ENCODE measurements at regions of chr1 and their contacts with region 1.

Region 1: DNA sequence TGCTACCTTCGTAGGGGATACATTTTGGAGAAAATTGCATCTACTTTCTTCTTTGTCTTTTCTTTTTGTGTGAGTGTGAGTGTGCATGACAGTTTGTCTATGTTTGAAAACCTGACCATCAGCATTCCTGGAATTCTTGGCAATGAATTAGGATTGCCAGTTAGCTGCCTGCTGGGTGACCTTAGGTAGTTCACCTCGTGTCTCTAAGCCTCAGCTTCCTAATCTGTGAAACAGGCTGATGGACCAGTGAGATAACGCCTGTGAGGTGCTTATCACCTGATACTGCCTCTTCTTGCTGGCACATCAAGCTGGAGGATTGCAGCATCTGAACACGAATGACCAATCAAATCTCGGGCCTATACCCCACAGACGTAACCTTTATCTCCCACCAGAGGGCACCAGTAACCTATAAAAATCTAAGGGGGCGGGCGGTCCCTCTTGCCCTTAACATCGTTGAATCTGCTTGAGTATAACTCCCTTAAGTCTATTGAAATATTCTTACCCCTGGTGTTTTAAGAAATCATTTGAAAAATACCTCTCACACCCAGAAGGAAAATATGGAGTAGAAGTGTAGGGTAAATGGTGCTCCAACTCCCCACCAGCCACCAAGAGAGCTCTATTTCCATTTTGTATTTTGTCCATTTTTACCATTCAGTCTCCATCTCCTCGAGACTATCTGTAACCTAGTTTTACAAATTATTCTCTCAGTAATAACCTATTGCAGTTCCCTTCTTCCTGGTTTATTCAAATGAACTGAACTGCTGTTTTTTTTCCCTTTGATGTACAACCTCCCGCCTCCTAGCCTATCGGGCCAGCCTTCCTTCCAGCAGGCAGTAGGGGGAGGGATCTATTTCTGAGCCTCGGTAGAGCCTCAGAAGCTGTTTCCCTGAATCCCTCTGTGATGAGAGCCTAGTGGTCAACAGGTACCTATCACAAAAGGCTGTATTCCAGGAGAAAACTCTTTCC is 49.7 kb downstream of the MDM4 start:
- DNase-seq: peak in 3 of 5 donors; percentile 33 to 38 (median 37)
- ATAC-seq: peak; percentile 38 to 88 (median 80)
- H3K4me3 ChIP-seq: no peak overlapping the region
- H3K27ac ChIP-seq: no peak overlapping the region
- H3K4me1 ChIP-seq: no peaks in the 10 kb centered on the region
- H3K27me3 ChIP-seq: no peaks in the 10 kb centered on the region
- CTCF ChIP-seq: peak; percentile 47 to 72 (median 63)
- POLR2A ChIP-seq: no peak

Region 2: GRCh38 chr1:204495078-204495753 is 70.7 kb before region 1 on chr1:
- intact Hi-C with region 1: no loop called
- DNase-seq: no peak
- ATAC-seq: no peak
- H3K4me3 ChIP-seq: peak overlapping the region; percentile 59 to 86 (median 75)
- H3K27ac ChIP-seq: peak overlapping the region; percentile 67 to 98 (median 90)
- H3K4me1 ChIP-seq: peaks cover 3 to 41% (median 26%) of the 10 kb centered on the region in 12 donors
- H3K27me3 ChIP-seq: no peaks in the 10 kb centered on the region
- CTCF ChIP-seq: no peak
- POLR2A ChIP-seq: no peak

Region 3: DNA sequence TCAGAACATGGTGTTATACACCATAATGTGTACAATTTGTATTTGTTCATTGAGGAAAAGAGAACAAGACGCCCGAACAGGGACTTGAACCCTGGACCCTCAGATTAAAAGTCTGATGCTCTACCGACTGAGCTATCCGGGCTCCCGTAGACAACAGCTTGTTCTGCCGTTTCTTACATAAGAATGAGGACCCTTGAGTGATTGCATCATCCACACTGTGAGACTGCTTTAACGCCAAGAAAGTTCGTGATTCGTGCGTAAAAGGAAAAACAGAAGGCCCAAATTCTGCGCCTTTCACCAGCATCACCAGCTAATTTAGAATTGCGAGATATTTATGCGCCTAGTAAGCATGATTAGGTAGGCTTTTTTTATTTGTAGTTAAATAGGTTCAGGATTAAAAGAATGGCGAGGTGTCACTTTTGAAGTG is 58.9 kb before region 1 on chr1:
- intact Hi-C with region 1: no loop called
- DNase-seq: peak in 4 of 5 donors; percentile 72 to 83 (median 78)
- ATAC-seq: peak; percentile 77 to 89 (median 82)
- H3K4me3 ChIP-seq: peak overlapping the region; percentile 5 to 76 (median 60)
- H3K27ac ChIP-seq: peak overlapping the region; percentile 70 to 89 (median 84)
- H3K4me1 ChIP-seq: peaks cover 0 to 34% (median 7%) of the 10 kb centered on the region in 12 donors
- H3K27me3 ChIP-seq: no peaks in the 10 kb centered on the region
- CTCF ChIP-seq: no peak
- POLR2A ChIP-seq: peak in 1 of 2 donors; percentile 7

Region 4: DNA sequence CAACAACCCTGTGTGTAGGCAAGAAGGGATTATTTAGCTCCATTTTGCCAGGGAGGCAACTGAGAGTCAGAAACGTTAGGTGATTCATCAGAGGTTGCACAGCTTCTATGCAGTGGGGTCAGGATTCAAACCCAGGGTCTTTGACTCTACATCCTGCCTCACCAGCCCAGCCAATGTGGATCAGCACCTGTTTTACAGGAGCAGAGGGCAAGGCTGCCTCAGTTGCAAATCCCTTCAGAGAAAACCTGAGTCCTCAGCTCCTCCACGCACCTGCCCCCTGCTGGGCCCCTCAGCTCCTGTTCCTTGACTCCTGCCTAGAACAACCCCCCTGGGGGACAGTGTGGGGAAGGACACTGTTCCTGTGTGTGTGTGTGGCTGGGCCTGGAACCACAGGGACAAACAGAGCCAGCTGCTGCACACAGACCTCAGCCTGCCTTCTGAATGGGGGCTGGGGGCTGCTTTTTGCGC is 58.0 kb after region 1 on chr1:
- intact Hi-C with region 1: loop called in 1 of 10 experiments (anchors 10 kb)
- DNase-seq: no peak
- ATAC-seq: no peak
- H3K4me3 ChIP-seq: no peak overlapping the region
- H3K27ac ChIP-seq: no peak overlapping the region
- H3K4me1 ChIP-seq: peaks cover 0 to 6% (median 0%) of the 10 kb centered on the region in 12 donors
- H3K27me3 ChIP-seq: no peaks in the 10 kb centered on the region
- CTCF ChIP-seq: no peak
- POLR2A ChIP-seq: no peak

Region 5: GRCh38 chr1:204763706-204764427 is 198.0 kb after region 1 on chr1:
- intact Hi-C with region 1: loop called in 9 of 10 experiments (anchors 1 to 5 kb)
- DNase-seq: peak; percentile 55 to 87 (median 73)
- ATAC-seq: peak; percentile 86 to 97 (median 93)
- H3K4me3 ChIP-seq: no peak overlapping the region
- H3K27ac ChIP-seq: no peak overlapping the region
- H3K4me1 ChIP-seq: peaks cover 0 to 13% (median 7%) of the 10 kb centered on the region in 12 donors
- H3K27me3 ChIP-seq: peaks cover 0 to 38% (median 17%) of the 10 kb centered on the region in 9 donors
- CTCF ChIP-seq: peak; percentile 63 to 88 (median 76)
- POLR2A ChIP-seq: no peak

Region 6: DNA sequence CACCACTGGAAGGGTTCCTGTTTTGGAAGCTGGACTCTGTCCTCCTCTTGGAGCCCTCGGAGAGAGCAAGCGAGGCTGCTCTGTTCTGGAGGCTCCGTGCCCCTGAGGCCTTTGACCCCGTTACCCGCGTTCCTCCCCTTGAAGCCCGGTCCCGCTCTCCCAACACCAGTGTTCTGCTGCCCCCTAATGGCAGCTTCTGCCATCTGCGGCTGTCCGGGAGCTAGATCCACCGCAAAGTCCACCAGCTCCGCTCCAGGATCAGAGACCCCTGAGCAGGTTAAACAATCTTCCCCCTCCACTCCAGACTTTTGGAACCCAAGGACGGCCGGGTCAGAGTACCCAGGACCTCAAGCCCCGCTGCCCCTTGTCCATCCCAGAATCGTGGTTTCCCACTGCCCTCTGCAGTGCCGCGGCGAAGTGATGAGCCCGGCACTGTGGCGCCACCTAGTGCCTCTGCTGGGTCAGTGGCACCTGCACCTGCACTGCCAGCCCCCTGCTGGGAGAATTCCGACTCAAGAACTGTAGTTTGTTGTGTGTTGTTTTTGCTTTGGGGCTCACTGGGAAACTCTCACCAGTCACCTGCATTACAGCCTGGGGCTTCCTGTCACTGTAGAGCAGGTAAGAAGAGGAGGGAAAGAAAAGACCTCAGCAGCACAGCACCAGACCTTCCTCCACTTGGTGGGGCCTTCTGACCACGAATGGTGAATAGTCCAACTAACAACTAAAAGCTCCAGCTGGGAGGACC is 241.2 kb after region 1 on chr1:
- intact Hi-C with region 1: loop called (anchors 1 to 2 kb)
- DNase-seq: peak; percentile 80 to 86 (median 82)
- ATAC-seq: peak; percentile 85 to 96 (median 94)
- H3K4me3 ChIP-seq: peak overlapping the region in 11 of 12 donors; percentile 37 to 63 (median 51)
- H3K27ac ChIP-seq: no peak overlapping the region
- H3K4me1 ChIP-seq: peaks cover 0 to 11% (median 0%) of the 10 kb centered on the region in 12 donors
- H3K27me3 ChIP-seq: no peaks in the 10 kb centered on the region
- CTCF ChIP-seq: peak; percentile 92 to 98 (median 96)
- POLR2A ChIP-seq: no peak

Region 7: DNA sequence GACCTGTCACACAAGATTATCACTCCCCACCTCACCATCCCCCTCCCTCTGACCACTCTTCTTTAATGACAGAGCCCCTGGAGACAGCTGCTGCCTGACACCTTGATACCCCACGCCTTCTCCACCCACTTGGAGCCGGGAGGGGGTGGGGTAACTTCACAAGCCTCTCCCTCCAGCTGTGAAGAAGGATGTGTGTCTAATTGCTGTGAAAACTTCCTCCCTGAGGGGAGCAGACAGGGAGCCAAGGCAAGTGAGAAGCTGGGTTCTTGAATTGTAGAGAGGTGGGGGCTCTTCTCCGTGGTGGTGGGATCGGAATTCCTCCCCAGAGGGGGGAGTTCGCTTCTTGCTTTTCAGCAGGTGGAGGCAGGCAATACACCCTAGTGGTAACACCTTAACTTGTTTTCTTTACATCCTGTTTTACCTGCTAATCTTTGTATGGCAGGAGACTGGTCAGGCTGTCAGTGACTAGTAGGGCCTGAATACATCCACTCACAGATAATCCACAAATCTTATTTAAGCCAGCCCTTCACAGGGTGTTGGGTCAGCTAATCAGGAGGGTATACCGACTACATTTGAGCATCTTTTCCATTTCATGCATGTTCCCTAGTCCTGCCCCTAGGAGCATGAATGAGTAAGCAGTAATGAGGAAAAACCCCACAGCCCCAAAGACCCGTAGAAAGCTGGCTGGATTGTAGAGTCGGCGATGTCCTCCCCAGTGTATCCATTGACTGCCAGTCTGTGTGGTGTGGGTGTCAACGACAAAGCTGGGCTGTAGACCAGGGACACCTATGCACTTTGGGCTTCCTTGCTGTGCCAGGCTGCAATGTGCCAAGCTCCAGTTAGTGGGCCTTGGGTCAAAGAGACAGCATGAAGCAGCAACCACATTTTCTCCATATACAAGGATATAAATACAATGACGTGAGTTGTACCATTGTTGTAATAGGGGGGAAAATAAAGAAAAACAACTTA is 362.1 kb after region 1 on chr1:
- intact Hi-C with region 1: loop called in 2 of 10 experiments (anchors 10 kb)
- DNase-seq: no peak
- ATAC-seq: no peak
- H3K4me3 ChIP-seq: no peak overlapping the region
- H3K27ac ChIP-seq: no peak overlapping the region
- H3K4me1 ChIP-seq: peaks cover 0 to 31% (median 10%) of the 10 kb centered on the region in 12 donors
- H3K27me3 ChIP-seq: peaks cover 0 to 13% (median 0%) of the 10 kb centered on the region in 9 donors
- CTCF ChIP-seq: no peak
- POLR2A ChIP-seq: no peak

Region 8: GRCh38 chr1:204941421-204942338 is 375.8 kb after region 1 on chr1:
- intact Hi-C with region 1: loop called in 5 of 10 experiments (anchors 5 to 10 kb)
- DNase-seq: peak; percentile 60 to 77 (median 62)
- ATAC-seq: peak; percentile 63 to 84 (median 74)
- H3K4me3 ChIP-seq: no peak overlapping the region
- H3K27ac ChIP-seq: peak overlapping the region in 1 of 12 donors; percentile 4
- H3K4me1 ChIP-seq: peaks cover 0 to 10% (median 3%) of the 10 kb centered on the region in 12 donors
- H3K27me3 ChIP-seq: no peaks in the 10 kb centered on the region
- CTCF ChIP-seq: peak; percentile 80 to 97 (median 90)
- POLR2A ChIP-seq: no peak

Region 9: GRCh38 chr1:204959374-204959773 is 393.5 kb after region 1 on chr1:
- intact Hi-C with region 1: loop called in 1 of 10 experiments (anchors 10 kb)
- DNase-seq: peak; percentile 43 to 83 (median 76)
- ATAC-seq: peak; percentile 89 to 96 (median 94)
- H3K4me3 ChIP-seq: no peak overlapping the region
- H3K27ac ChIP-seq: peak overlapping the region in 11 of 12 donors; percentile 46 to 91 (median 61)
- H3K4me1 ChIP-seq: peaks cover 0 to 36% (median 8%) of the 10 kb centered on the region in 12 donors
- H3K27me3 ChIP-seq: no peaks in the 10 kb centered on the region
- CTCF ChIP-seq: peak in 2 of 12 donors; percentile 11 to 14
- POLR2A ChIP-seq: no peak

Measured in heart left ventricle (tissue), 16 donors.